Dorsolateral prefrontal cortex (tissue), 120 donors: ENCODE measurements at regions of chr19 and their contacts with region 1.

Region 1: GRCh38 chr19:11293433-11294389 is 2.2 kb upstream of the TSPAN16 start:
- DNase-seq: peak; percentile 87 to 93 (median 91)
- H3K4me3 ChIP-seq: peak overlapping the region; percentile 12 to 65 (median 47)
- H3K27ac ChIP-seq: peak overlapping the region in 53 of 59 donors; percentile 15 to 86 (median 70)
- H3K27me3 ChIP-seq: no peaks in the 10 kb centered on the region
- CTCF ChIP-seq: peak; percentile 81 to 99 (median 95)

Region 2: DNA sequence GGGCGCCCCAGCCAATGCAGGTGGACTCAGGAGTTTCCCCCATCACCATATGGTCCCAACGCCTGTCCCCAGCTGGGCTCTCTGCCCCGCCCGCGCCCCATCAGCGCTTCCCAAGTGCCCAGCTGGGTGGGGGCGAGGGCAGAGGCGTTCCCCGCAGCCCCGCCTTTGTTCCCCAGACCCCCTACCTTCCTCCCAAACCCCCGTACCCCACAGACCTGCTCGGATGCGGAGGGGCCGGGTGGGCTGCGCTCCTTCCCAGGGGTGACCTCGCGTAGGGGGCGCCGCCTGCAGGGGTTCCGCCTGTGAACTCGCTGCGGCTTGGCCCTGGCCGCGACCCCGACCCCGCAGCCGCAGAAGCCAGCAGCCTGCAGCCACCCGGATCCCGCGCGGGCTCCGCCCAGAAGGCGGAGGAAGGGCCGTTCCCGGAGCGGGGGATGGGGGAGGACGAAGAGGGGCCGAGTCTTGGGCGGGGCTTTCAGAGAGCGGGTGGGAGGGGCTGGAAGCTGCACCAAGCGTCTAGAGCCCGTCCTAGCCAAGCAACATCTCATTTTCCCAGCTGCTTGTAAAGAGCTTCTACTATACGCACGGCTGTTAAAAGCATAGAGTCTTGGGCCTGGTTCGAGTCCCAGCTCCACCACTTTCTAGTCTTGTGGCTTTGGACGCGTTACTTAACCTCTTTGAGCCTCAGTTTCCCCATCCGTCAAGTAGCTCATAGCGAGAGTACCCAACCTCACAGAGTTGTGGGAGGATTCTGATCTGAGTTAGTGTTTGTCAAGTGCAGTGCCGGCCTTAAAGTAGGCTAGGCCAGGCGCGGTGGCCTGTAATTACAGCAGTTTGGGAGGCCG is 45.8 kb after region 1 on chr19 and contains the start of gene RAB3D:
- intact Hi-C with region 1: loop called (anchors 5 kb)
- DNase-seq: peak; percentile 72 to 93 (median 88)
- H3K4me3 ChIP-seq: peak within 1 kb of the TSS; percentile 43 to 88 (median 77)
- H3K27ac ChIP-seq: peak within 1 kb of the TSS in 57 of 59 donors; percentile 39 to 94 (median 87)
- H3K27me3 ChIP-seq: no peaks in the 10 kb centered on the region
- CTCF ChIP-seq: peak in 9 of 56 donors; percentile 6 to 19 (median 11)
- total RNA-seq, gene RAB3D: 16.1 to 39.7 (median 27.1) TPM

Region 3: GRCh38 chr19:11364935-11365334 is 71.2 kb after region 1 on chr19:
- intact Hi-C with region 1: loop called in 1 of 2 experiments (anchors 5 kb)
- DNase-seq: peak in 4 of 10 donors; percentile 32 to 68 (median 56)
- H3K4me3 ChIP-seq: no peak overlapping the region
- H3K27ac ChIP-seq: peak overlapping the region in 16 of 59 donors; percentile 5 to 66 (median 46)
- H3K27me3 ChIP-seq: no peaks in the 10 kb centered on the region
- CTCF ChIP-seq: no peak

Region 4: DNA sequence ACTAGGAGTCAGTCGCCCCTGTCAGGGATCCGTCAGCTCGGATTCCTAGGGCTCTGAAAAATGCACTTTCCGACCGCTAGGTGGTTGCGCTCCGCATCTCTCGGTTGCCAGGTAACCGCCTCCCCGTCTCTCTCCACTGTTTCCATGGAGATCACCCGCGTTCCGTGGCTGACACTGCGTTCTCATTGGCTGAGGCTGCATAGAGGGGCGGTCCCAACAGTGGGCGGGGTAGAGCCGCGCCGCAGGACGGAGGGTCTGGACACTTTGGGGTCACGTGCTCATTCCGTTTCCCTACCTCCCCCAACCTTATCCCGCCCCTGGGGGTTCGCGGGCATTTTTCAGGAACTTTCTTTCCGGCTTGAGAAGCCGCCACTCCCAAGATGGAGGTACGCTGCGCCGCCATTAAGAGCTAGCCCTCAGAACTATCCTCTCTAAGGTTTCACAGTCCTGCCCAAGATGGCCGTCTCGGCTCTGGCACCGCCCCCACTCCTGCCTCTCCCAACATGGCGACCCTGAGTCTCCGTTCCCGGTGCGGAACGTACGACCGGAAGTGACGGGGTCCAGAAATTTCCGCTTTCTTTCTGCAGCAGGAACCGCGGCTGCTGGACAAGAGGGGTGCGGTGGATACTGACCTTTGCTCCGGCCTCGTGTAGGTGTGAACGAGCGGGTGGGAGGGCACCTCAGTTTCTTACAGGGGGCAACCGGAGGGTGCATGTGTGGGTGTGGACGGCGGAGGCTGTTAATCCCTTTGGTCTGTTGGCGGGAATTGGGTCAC is 141.5 kb after region 1 on chr19 and contains the starts of genes ODAD3 and PRKCSH:
- intact Hi-C with region 1: loop called (anchors 5 kb)
- DNase-seq: peak; percentile 98 to 100 (median 100)
- H3K4me3 ChIP-seq: peak within 1 kb of the TSS; percentile 69 to 96 (median 85)
- H3K27ac ChIP-seq: peak within 1 kb of the TSS; percentile 69 to 99 (median 96)
- H3K27me3 ChIP-seq: no peaks in the 10 kb centered on the region
- CTCF ChIP-seq: peak; percentile 65 to 98 (median 91)
- total RNA-seq, gene ODAD3: 1.5 to 15.0 (median 4.5) TPM
- total RNA-seq, gene PRKCSH: 166 to 389 (median 218) TPM